GM10248 (cell line): ENCODE measurements at regions of chr17 and their contacts with region 1.

Region 1: GRCh38 chr17:7515911-7516610 is 31.9 kb downstream of the POLR2A start:
- DNase-seq: no peak
- CTCF ChIP-seq: no peak

Region 2: GRCh38 chr17:7484067-7484918 is 31.8 kb before region 1 on chr17 and contains the start of gene POLR2A:
- CTCF ChIA-PET with region 1: no interaction called
- POLR2A ChIA-PET with region 1: interaction called, 12 read pairs
- DNase-seq: peak; percentile 99
- CTCF ChIP-seq: no peak

Region 3: DNA sequence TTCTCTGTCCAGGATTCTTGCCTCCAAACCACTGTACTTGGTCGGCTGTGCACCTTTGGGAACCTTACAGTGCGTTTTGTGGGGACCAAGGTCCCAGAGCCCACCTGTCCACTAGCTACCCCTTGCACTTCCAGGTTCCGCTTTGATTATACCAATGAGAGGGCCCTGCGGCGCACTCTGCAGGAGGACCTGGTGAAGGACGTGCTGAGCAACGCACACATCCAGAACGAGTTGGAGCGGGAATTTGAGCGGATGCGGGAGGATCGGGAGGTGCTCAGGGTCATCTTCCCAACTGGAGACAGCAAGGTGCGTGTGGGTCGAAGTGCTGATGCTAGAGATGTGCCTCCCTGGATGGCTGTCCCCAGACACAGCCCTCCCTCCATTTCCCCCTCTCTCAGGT is 13.1 kb before region 1 on chr17:
- CTCF ChIA-PET with region 1: interaction called, 18 read pairs
- POLR2A ChIA-PET with region 1: interaction called, 3 read pairs
- DNase-seq: no peak
- CTCF ChIP-seq: peak; percentile 11

Region 4: GRCh38 chr17:7530023-7530900 is 14.2 kb after region 1 on chr17:
- CTCF ChIA-PET with region 1: interaction called, 25 read pairs
- POLR2A ChIA-PET with region 1: no interaction called
- DNase-seq: no peak
- CTCF ChIP-seq: no peak

Region 5: DNA sequence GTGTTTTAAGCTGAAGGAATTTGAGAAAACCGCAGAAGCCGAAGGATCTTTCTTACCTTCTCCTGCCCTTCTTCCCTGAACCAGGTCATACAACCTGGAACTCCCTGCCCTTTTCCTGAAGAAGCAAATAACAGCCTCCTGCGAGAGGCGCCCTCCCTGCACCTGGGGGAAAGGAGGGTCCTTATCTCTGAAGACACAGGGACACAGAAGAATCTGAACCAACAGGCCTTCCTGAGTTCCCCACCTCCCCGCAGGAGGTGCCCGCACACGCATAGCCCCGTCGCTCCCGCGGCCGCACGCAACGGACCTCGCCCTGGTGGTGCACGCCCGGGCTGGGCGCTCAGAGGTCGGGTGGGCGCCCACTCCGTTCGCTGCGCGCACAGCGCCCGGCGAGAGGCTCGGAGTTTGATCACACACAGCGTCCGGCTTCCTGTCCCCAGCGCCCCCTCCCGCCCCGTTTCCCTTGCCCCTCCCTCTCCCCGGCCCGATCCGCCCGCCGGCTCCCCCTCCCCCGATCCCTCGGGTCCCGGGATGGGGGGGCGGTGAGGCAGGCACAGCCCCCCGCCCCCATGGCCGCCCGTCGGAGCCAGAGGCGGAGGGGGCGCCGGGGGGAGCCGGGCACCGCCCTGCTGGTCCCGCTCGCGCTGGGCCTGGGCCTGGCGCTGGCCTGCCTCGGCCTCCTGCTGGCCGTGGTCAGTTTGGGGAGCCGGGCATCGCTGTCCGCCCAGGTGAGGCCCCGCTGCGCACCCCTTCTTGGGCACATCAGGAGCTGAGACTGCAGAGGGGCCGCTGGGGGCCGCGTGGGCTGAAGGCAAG is 32.7 kb after region 1 on chr17 and contains the start of gene TNFSF12:
- CTCF ChIA-PET with region 1: interaction called, 20 read pairs
- POLR2A ChIA-PET with region 1: no interaction called
- DNase-seq: peak; percentile 76
- CTCF ChIP-seq: no peak